Calu3 (cell line): ENCODE measurements at regions of chr4 and their contacts with region 1.

Region 1: DNA sequence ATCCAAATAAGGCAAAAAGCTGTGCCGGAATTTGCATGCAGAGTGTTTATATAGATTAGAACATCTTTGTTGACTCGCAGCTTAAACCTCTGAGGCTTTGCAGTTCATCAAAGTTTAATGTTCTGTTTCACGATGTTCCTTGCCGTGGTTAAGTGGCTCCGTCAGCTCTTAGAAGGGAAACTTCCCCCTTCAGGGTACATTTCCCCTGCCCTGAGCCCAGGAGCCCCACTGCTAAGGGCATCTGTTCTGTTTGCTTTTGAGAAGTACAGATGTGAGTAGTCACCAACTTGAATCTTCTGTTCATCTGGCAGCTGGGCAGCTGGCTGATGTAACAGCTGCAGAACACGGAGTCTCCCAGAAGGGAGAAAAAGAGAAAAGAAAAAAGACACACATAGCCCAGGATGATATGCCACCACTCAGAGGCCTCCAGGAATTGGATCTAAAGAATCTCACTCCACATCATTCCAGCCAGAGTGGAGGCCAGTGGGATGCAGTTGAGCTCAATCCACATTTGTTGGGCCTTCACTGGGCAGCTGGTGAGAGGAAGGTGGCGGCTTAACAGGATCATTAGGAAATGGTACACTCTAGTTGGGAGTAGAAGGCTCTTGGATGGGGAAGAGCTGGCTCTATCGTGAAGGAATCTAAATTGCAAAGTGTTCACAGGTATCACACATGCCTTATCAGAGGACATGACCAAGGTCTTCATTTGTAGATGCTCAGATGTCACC is 178.7 kb upstream of the RBPJ start:
- DNase-seq: no peak
- H3K4me3 Mint-ChIP-seq: no peak overlapping the region
- H3K27ac Mint-ChIP-seq: no peak overlapping the region
- H3K4me1 Mint-ChIP-seq: peaks cover 10% of the 10 kb centered on the region
- H3K27me3 Mint-ChIP-seq: no peaks in the 10 kb centered on the region
- CTCF ChIP-seq: no peak

Region 2: GRCh38 chr4:25441519-25442117 is 700.5 kb before region 1 on chr4:
- CTCF ChIA-PET with region 1: no interaction called
- intact Hi-C with region 1: no loop called
- DNase-seq: peak; percentile 74
- H3K4me3 Mint-ChIP-seq: no peak overlapping the region
- H3K27ac Mint-ChIP-seq: peak overlapping the region; percentile 23
- H3K4me1 Mint-ChIP-seq: peaks cover 27% of the 10 kb centered on the region
- H3K27me3 Mint-ChIP-seq: no peaks in the 10 kb centered on the region
- CTCF ChIP-seq: peak; percentile 53

Region 3: GRCh38 chr4:26120098-26120825 is 21.8 kb before region 1 on chr4:
- CTCF ChIA-PET with region 1: interaction called, 15 read pairs
- intact Hi-C with region 1: no loop called
- DNase-seq: no peak
- H3K4me3 Mint-ChIP-seq: no peak overlapping the region
- H3K27ac Mint-ChIP-seq: no peak overlapping the region
- H3K4me1 Mint-ChIP-seq: peaks cover 17% of the 10 kb centered on the region
- H3K27me3 Mint-ChIP-seq: no peaks in the 10 kb centered on the region
- CTCF ChIP-seq: no peak

Region 4: GRCh38 chr4:26412381-26413372 is 270.6 kb after region 1 on chr4:
- CTCF ChIA-PET with region 1: no interaction called
- intact Hi-C with region 1: no loop called
- DNase-seq: no peak
- H3K4me3 Mint-ChIP-seq: no peak overlapping the region
- H3K27ac Mint-ChIP-seq: no peak overlapping the region
- H3K4me1 Mint-ChIP-seq: no peaks in the 10 kb centered on the region
- H3K27me3 Mint-ChIP-seq: no peaks in the 10 kb centered on the region
- CTCF ChIP-seq: no peak